CD14-positive monocyte (primary cell): ENCODE measurements at regions of chr17 and their contacts with region 1.

Region 1: DNA sequence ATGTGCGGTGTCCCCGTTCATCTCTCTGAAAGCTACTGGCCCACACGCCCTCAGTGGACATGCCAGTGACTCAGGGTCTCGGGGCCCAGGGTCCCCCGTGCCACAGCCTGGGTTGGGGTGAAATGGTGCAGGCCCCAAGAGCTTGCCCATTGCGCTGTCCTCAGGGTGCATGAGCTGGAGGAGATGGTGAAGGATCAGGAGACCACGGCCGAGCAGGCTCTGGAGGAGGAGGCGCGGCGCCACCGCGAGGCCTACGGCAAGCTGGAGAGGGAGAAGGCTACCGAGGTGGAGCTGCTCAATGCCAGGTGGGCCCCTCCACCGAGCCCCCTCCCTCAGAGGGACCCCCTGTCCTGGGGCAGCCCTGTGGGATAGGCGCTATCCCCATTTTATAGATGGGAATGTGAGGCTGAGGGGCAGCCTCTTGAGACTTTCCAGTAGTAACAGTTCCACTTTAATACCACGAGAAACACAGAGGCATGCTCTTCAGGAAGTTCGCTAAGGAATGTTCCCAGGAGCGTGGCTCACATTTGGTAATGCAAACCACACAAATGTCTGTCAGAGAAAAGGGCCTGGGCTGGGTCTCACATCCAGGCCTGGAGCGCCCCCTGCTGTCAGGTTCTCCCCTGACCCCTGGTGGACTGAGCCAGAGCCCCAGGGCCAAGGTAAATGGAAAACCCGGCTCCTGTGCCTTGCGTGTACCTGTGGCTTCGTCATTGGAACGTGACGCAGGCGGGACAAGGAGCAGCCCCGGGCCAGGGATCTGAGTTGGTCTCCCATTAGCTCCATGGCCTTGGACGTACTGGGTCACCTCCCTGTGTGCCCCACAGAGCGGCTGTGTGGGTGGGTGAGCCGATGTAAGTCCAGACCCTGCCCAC is 133.7 kb downstream of the RAB11FIP4 start:
- DNase-seq: peak; percentile 68 to 76 (median 75)
- H3K4me3 ChIP-seq: no peak overlapping the region
- H3K4me3 Mint-ChIP-seq: no peak overlapping the region
- H3K27ac ChIP-seq: no peak overlapping the region
- H3K27ac Mint-ChIP-seq: peak overlapping the region in 2 of 7 donors; percentile 56 to 63
- H3K4me1 ChIP-seq: no peaks in the 10 kb centered on the region
- H3K4me1 Mint-ChIP-seq: peaks cover 3% of the 10 kb centered on the region
- H3K27me3 ChIP-seq: no peaks in the 10 kb centered on the region
- H3K27me3 Mint-ChIP-seq: peaks cover 1 to 3% (median 1%) of the 10 kb centered on the region in 3 donors
- CTCF ChIP-seq: peak; percentile 97

Region 2: DNA sequence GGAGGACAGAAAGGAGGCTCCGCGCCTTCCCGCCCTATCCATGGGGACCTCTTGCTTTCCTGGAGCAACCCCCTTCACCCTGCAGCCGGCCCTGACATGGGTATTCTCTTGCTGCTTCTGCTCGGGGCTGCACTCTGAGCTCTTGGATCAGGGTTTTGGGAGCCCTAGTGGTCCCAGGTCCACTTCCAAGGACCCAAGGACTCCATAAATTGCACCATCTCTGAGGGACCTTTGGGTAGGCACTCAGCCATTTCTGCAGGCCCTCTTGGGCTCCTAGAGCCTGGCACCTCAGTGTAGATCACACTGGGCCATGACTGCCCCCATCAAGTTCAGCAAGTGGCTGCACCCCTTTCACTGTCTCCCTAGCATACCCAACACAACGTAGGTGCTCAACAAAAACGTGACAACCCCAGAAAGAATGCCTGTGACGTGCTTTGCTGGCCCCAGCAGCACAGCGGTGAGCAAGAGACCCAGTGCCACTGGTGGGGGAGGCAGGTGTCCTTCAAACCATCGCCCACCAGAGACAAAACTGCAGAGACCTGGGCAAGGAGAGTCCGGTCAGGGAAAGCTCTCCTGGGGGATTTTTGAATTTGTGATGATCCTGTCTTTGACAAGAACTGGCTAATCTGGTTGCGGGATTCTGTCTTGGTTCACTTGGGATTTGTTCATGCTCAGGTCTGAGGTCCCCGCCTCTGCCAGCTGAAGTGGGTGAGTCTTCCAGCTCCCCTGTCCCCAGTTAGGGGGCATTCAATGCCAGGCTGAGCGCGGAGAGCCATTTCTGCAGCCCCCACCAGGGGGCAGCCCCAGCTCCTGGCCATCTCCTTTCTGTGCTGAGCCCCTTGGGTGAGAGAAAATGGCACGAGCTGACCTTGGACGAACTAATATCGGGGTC is 136.1 kb before region 1 on chr17:
- intact Hi-C with region 1: loop called in 1 of 2 experiments (anchors 2 kb)
- DNase-seq: peak; percentile 17 to 31 (median 25)
- H3K4me3 ChIP-seq: no peak overlapping the region
- H3K4me3 Mint-ChIP-seq: peak overlapping the region in 1 of 2 donors; percentile 39
- H3K27ac ChIP-seq: no peak overlapping the region
- H3K27ac Mint-ChIP-seq: no peak overlapping the region
- H3K4me1 ChIP-seq: peaks cover 10 to 14% of the 10 kb centered on the region in 2 donors
- H3K4me1 Mint-ChIP-seq: peaks cover 16% of the 10 kb centered on the region
- H3K27me3 ChIP-seq: peaks cover 26 to 53% of the 10 kb centered on the region in 2 donors
- H3K27me3 Mint-ChIP-seq: peaks cover 51 to 63% (median 53%) of the 10 kb centered on the region in 3 donors
- CTCF ChIP-seq: peak; percentile 84

Region 3: GRCh38 chr17:31437720-31438420 is 87.3 kb before region 1 on chr17:
- intact Hi-C with region 1: loop called (anchors 1 kb)
- DNase-seq: no peak
- H3K4me3 ChIP-seq: no peak overlapping the region
- H3K4me3 Mint-ChIP-seq: no peak overlapping the region
- H3K27ac ChIP-seq: no peak overlapping the region
- H3K27ac Mint-ChIP-seq: no peak overlapping the region
- H3K4me1 ChIP-seq: no peaks in the 10 kb centered on the region
- H3K4me1 Mint-ChIP-seq: peaks cover 7% of the 10 kb centered on the region
- H3K27me3 ChIP-seq: no peaks in the 10 kb centered on the region
- H3K27me3 Mint-ChIP-seq: peaks cover 18 to 38% (median 18%) of the 10 kb centered on the region in 3 donors
- CTCF ChIP-seq: no peak